PC-9 (cell line): ENCODE measurements at regions of chr6 and their contacts with region 1.

Region 1: DNA sequence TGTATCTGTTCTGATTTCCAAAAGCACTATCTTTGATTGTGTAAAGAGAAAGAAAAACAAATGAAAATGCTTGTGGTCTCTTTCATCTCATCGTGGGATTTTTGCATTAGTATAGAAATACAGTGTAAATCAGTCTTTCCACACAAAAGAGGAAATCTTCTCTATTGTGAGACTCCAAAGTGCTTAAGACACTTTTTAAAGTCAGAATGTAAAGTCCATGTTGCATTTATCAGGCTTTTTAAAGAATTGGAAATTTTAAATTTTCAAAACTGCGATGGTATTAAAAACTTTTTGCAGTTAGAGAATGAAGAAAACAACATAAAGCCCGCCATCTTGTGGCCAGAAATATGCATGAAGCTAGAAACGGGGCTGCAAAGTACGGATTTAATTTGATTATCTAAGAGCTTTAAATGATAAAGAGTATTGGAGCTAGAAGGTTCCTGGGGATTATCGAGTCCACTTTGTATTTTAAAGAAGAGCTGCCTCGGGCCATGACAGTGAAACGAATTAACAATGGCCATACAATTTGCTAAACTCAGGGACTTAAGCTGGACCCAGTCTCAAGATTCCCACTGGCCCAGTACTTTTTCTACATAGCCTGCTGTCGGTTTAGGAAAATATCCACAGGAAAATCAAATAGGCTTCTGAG is 339.6 kb downstream of the ARHGAP18 start:
- DNase-seq: peak; percentile 37 to 50
- H3K4me3 ChIP-seq: no peak overlapping the region
- H3K27ac ChIP-seq: no peak overlapping the region
- H3K4me1 ChIP-seq: peaks cover 6% of the 10 kb centered on the region
- H3K27me3 ChIP-seq: no peaks in the 10 kb centered on the region
- CTCF ChIP-seq: peak; percentile 96

Region 2: DNA sequence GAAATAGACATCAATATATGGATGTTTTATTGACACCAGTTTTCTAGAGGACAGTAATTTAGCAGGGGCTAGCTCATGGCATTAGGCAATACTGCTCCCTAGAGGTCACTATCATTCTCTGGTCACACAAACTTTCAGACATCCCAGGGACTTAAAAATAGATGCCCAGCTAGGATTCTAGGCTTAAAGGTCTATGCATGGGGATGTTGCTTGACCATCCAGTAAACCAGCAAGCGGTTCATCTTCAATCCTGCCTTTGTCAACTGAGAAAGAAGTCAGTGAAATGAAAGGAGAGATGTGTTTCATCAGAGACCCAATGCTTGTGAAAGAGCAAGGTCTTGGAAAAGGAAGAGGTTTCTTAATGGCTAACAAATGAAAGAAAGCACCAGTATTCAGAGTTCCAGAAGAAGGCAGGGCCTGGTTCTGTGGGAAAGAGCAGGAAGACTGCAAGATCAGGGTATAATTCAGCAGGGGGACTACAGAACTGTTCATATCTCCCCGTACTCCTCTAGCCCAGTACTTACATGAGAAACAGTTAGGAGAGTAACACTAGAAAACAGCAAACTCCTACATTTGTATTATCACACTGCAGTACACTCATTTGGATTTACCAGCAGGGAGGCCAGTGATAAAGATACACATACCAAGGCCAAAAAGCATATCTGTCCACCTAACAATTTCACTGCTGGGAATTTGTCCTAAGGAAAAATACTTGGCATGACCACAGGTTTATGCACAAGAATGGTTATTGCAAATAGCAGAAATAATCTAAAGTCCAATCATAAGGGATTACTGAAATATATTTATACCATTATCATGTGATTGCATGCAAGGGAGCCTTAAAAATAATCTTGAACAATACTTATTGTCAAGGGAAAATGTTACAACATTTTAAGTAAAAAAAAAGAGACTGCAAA is 638.9 kb before region 1 on chr6:
- CTCF ChIA-PET with region 1: no interaction called
- POLR2A ChIA-PET with region 1: no interaction called
- intact Hi-C with region 1: loop called (anchors 10 kb)
- DNase-seq: peak; percentile 22 to 63
- H3K4me3 ChIP-seq: no peak overlapping the region
- H3K27ac ChIP-seq: no peak overlapping the region
- H3K4me1 ChIP-seq: no peaks in the 10 kb centered on the region
- H3K27me3 ChIP-seq: no peaks in the 10 kb centered on the region
- CTCF ChIP-seq: peak; percentile 86

Region 3: GRCh38 chr6:129217701-129218100 is 152.7 kb before region 1 on chr6:
- CTCF ChIA-PET with region 1: no interaction called
- POLR2A ChIA-PET with region 1: no interaction called
- intact Hi-C with region 1: no loop called
- DNase-seq: no peak
- H3K4me3 ChIP-seq: no peak overlapping the region
- H3K27ac ChIP-seq: no peak overlapping the region
- H3K4me1 ChIP-seq: no peaks in the 10 kb centered on the region; the same call in 1 of the 2 replicates
- H3K27me3 ChIP-seq: no peaks in the 10 kb centered on the region
- CTCF ChIP-seq: no peak

Region 4: GRCh38 chr6:129251669-129252376 is 118.6 kb before region 1 on chr6:
- CTCF ChIA-PET with region 1: no interaction called
- POLR2A ChIA-PET with region 1: no interaction called
- intact Hi-C with region 1: loop called (anchors 2 kb)
- DNase-seq: peak; percentile 42 to 64
- H3K4me3 ChIP-seq: no peak overlapping the region
- H3K27ac ChIP-seq: no peak overlapping the region
- H3K4me1 ChIP-seq: 0 out of 2 replicates have a peak, but pooled peaks cover 8% of the 10 kb centered on the region
- H3K27me3 ChIP-seq: no peaks in the 10 kb centered on the region
- CTCF ChIP-seq: peak; percentile 95

Region 5: GRCh38 chr6:129498950-129499842 is 128.8 kb after region 1 on chr6:
- CTCF ChIA-PET with region 1: no interaction called
- POLR2A ChIA-PET with region 1: no interaction called
- intact Hi-C with region 1: loop called (anchors 10 kb)
- DNase-seq: peak in 1 of 2 experiments; percentile 57
- H3K4me3 ChIP-seq: peak overlapping the region; percentile 15; the same call in 1 of the 2 replicates
- H3K27ac ChIP-seq: no peak overlapping the region
- H3K4me1 ChIP-seq: peaks cover 25% of the 10 kb centered on the region
- H3K27me3 ChIP-seq: no peaks in the 10 kb centered on the region
- CTCF ChIP-seq: peak; percentile 96

Region 6: DNA sequence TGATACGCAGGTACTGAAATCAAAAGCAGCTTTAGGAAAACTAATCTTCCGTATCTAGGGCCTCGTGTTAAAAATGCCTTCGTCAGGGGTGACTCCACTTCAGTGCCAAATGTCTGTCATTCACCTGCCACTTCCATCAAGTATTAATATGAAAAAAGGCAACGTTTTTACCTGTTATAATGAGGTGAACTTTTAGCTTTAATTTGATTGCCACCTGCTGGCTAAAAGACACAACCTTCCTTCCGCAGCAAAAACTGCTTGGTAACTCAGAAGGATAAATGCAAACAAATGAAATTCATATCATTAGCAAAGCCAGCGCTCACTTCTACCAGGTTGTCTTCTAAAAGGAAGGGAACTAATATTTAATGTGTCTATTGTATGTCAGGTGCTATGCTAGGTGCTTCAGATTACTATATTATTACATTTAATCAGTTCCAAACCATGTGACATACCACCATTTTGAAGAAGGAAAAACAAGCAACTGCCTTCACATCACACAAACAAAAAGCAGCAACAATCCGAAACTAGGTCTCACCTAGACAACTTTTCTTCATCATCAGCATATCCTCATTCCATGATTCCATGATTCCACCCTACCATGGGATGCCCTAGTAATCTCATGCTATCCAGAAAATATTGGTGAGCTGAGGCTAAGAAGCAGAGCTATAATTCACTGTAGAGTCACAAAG is 360.2 kb after region 1 on chr6:
- CTCF ChIA-PET with region 1: no interaction called
- POLR2A ChIA-PET with region 1: no interaction called
- intact Hi-C with region 1: loop called (anchors 10 kb)
- DNase-seq: peak in 1 of 2 experiments; percentile 50
- H3K4me3 ChIP-seq: no peak overlapping the region
- H3K27ac ChIP-seq: no peak overlapping the region
- H3K4me1 ChIP-seq: no peaks in the 10 kb centered on the region
- H3K27me3 ChIP-seq: no peaks in the 10 kb centered on the region
- CTCF ChIP-seq: peak; percentile 89